Dorsolateral prefrontal cortex (tissue), 120 donors: ENCODE measurements at regions of chr17 and their contacts with region 1.

Region 1: DNA sequence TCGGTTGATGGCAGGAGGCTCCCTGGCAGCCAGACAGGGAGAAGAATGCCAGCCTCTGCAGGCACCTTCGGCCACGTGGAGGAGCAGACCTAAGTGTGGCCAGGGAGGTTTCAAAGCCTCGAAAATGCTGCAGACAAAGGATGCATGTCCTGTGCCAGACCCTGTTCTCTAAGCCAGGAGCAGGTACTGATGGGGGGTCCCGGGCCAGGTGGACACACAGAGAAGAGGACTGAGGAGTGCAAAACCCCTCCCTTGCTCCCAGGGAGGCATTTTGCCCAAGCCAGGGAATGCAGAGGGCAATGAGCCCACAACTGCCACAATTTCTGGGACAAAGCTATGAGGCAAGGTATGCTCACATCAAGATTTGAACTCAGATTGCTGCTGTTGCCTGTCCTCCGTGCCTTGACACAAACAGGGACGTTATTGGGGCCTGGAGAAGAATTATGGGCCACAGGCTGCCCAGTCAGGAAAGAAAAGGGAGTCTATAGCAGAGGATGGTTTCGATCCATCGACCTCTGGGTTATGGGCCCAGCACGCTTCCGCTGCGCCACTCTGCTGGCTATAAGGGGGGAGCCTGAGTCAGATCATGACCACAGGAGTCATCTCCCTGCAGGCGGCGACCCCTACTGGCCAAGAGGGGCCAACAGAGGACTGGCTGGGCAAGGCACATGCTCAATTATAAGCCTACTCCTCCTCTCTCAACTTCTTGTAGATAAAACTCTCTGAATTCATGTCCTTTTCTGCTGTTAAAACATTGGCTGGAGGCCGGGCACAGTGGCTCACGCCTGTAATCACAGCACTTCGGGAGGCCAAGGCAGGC is 25.1 kb upstream of the FOXK2 start:
- DNase-seq: peak; percentile 85 to 95 (median 90)
- H3K4me3 ChIP-seq: peak overlapping the region in 21 of 59 donors; percentile 2 to 39 (median 19)
- H3K27ac ChIP-seq: peak overlapping the region in 57 of 59 donors; percentile 15 to 97 (median 70)
- H3K27me3 ChIP-seq: no peaks in the 10 kb centered on the region
- CTCF ChIP-seq: peak; percentile 71 to 96 (median 90)

Region 2: GRCh38 chr17:82351716-82352488 is 142.5 kb before region 1 on chr17:
- intact Hi-C with region 1: loop called in 1 of 2 experiments (anchors 10 kb)
- DNase-seq: peak; percentile 71 to 90 (median 84)
- H3K4me3 ChIP-seq: peak overlapping the region in 10 of 59 donors; percentile 2 to 33 (median 24)
- H3K27ac ChIP-seq: no peak overlapping the region
- H3K27me3 ChIP-seq: peaks cover 0 to 37% (median 10%) of the 10 kb centered on the region in 45 donors
- CTCF ChIP-seq: peak; percentile 94 to 99 (median 97)

Region 3: DNA sequence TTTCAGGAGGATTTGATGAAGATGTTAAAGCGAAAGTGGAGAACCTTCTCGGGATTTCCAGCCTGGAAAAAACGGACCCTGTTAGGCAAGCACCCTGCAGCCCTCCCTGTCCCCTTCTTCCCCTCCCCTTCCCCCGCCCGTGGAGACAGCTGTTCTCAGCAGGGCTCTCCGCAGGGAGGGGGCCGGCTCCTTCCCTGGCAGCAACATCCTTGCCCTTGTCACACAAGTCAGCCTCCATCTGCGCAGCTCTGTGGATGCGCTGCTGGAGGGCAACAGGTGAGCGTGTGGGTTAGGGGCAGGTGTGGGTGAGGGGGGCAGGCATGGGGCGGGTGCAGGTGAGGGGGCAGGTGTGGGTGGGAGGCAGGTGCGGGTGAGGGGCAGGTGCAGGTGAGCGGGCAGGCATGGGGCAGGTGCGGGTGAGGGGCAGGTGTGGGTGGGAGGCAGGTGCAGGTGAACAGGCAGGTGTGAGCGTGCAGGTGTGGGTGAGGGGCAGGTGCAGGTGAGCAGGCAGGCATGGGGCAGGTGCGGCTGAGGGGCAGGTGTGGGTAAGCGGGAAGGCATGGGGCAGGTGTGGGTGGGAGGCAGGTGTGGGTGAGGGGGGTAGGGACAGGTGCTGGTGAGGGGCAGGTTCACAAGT is 53.3 kb before region 1 on chr17:
- intact Hi-C with region 1: no loop called
- DNase-seq: no peak
- H3K4me3 ChIP-seq: peak overlapping the region in 11 of 59 donors; percentile 0 to 31 (median 14)
- H3K27ac ChIP-seq: peak overlapping the region in 48 of 59 donors; percentile 7 to 83 (median 58)
- H3K27me3 ChIP-seq: no peaks in the 10 kb centered on the region
- CTCF ChIP-seq: no peak

Region 4: GRCh38 chr17:82457997-82458864 is 36.2 kb before region 1 on chr17 and contains the start of gene NARF:
- intact Hi-C with region 1: loop called (anchors 2 to 5 kb)
- DNase-seq: peak; percentile 96 to 100 (median 98)
- H3K4me3 ChIP-seq: peak within 1 kb of the TSS; percentile 67 to 100 (median 93)
- H3K27ac ChIP-seq: peak within 1 kb of the TSS; percentile 97 to 100 (median 100)
- H3K27me3 ChIP-seq: no peaks in the 10 kb centered on the region
- CTCF ChIP-seq: peak in 15 of 56 donors; percentile 3 to 27 (median 12)
- total RNA-seq, gene NARF: 56.4 to 136 (median 81.0) TPM

Region 5: GRCh38 chr17:82518826-82519810 is 24.7 kb after region 1 on chr17 and contains the start of gene FOXK2:
- intact Hi-C with region 1: loop called in 1 of 2 experiments (anchors 2 kb)
- DNase-seq: peak; percentile 84 to 97 (median 92)
- H3K4me3 ChIP-seq: peak within 1 kb of the TSS; percentile 60 to 93 (median 81)
- H3K27ac ChIP-seq: peak within 1 kb of the TSS; percentile 82 to 99 (median 95)
- H3K27me3 ChIP-seq: no peaks in the 10 kb centered on the region
- CTCF ChIP-seq: peak in 8 of 56 donors; percentile 12 to 48 (median 20)
- total RNA-seq, gene FOXK2: 65.0 to 126 (median 81.9) TPM

Region 6: GRCh38 chr17:82551779-82552457 is 57.5 kb after region 1 on chr17:
- intact Hi-C with region 1: loop called in 1 of 2 experiments (anchors 5 kb)
- DNase-seq: peak; percentile 43 to 70 (median 58)
- H3K4me3 ChIP-seq: peak overlapping the region in 1 of 59 donors; percentile 29
- H3K27ac ChIP-seq: peak overlapping the region in 52 of 59 donors; percentile 1 to 80 (median 54)
- H3K27me3 ChIP-seq: no peaks in the 10 kb centered on the region
- CTCF ChIP-seq: peak in 55 of 56 donors; percentile 26 to 74 (median 62)

Region 7: GRCh38 chr17:82559566-82560251 is 65.3 kb after region 1 on chr17:
- intact Hi-C with region 1: loop called (anchors 5 to 10 kb)
- DNase-seq: no peak
- H3K4me3 ChIP-seq: peak overlapping the region in 41 of 59 donors; percentile 5 to 61 (median 34)
- H3K27ac ChIP-seq: peak overlapping the region; percentile 17 to 95 (median 88)
- H3K27me3 ChIP-seq: no peaks in the 10 kb centered on the region
- CTCF ChIP-seq: no peak

Region 8: DNA sequence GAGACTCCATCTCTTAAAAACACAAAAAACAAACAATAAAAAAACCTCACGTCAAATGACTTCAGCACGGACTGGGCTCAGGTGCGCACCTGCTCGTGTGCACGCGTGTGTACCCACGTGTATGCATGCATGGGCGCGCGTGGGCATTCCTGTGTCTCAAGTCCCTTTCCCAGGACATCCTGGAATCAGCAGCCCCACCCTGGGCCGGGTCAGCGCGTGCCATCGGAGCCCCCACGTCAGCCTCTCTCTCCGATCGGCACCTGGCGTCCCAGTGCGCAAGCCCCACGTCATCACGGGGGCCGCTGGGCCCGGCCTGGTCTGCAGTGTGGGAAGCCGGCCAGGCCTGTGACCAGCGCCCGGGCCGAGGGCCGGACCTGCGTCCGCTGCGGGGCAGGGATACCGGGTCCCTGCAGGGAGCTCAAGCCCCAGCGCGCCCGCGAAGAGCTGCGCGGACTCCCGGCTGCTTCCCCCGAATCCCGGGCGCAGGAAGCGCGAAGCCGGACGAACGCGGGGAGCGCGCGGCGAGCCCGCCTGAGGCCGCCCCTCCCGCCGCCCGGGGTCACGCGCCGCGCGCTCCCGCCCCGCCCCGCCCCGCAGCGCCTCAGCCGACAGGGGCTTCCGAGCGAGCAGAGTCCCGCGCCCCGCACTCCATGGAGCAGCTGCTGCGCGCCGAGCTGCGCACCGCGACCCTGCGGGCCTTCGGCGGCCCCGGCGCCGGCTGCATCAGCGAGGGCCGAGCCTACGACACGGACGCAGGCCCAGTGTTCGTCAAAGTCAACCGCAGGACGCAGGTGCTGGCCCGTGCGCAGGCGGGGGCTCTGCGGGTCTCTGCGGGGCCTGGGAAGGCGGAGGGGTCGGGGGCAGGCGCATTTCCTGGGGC is 240.8 kb after region 1 on chr17 and contains the start of gene FN3K:
- intact Hi-C with region 1: loop called in 1 of 2 experiments (anchors 10 kb)
- DNase-seq: peak; percentile 56 to 82 (median 73)
- H3K4me3 ChIP-seq: peak within 1 kb of the TSS; percentile 65 to 90 (median 83)
- H3K27ac ChIP-seq: peak within 1 kb of the TSS; percentile 79 to 99 (median 96)
- H3K27me3 ChIP-seq: no peaks in the 10 kb centered on the region
- CTCF ChIP-seq: peak in 4 of 56 donors; percentile 15 to 30 (median 16)
- total RNA-seq, gene FN3K: 62.5 to 210 (median 123) TPM